ENCODE measurements at regions of chr10 and their contacts with region 1.

Region 1: GRCh38 chr10:21495752-21496342 is 29.6 kb downstream of the SKIDA1 start:
- DNase-seq: peak; percentile 56 to 94
- H3K4me3 ChIP-seq: peak overlapping the region; percentile 81
- H3K27ac ChIP-seq: peak overlapping the region; percentile 48
- H3K4me1 ChIP-seq: peaks cover 6% of the 10 kb centered on the region
- H3K27me3 ChIP-seq: no peaks in the 10 kb centered on the region
- CTCF ChIP-seq: peak; percentile 78

Region 2: DNA sequence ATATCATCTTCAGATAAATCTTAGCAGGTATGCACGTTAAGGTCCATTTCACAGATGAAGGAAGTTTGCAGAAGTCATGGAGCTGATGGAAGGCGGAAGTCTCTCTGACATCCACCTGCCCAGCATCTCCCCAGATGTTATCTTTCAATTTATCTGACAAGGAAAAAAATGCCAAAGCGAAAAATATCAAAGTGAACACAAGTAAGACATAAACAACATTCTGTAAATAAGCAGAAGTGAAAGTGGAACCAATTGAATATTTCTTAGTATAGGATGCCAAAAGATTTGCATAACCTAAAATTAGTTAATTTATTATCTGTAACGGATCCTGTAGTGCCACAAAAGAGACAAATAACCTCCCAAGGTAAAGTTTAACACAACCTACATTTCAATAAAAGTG is 525.1 kb before region 1 on chr10:
- CTCF ChIA-PET with region 1: no interaction called
- POLR2A ChIA-PET with region 1: no interaction called
- intact Hi-C with region 1: no loop called
- DNase-seq: no peak
- H3K4me3 ChIP-seq: no peak overlapping the region
- H3K27ac ChIP-seq: no peak overlapping the region
- H3K4me1 ChIP-seq: no peaks in the 10 kb centered on the region
- H3K27me3 ChIP-seq: no peaks in the 10 kb centered on the region
- CTCF ChIP-seq: no peak

Region 3: DNA sequence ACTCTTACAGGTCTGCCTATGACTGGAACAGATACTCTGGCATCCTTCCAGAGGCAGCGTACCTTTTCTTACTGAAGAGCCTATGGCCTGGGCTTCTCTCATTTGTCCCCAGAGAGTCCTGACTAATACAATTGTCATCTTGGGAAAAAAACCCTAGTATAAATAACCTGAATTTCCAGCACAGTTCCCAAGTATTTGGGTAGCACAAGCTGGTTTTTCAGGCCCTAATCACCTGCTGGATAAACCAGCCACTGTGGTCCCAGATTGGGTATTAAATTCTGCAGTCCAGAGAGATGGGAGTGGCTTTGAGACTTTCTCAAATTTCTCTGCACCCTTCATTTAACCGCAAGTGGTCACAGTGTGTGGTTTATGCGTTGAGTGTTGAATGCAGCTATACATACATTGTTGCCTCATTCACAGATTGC is 412.0 kb before region 1 on chr10:
- CTCF ChIA-PET with region 1: no interaction called
- POLR2A ChIA-PET with region 1: no interaction called
- intact Hi-C with region 1: loop called (anchors 10 kb)
- DNase-seq: peak; percentile 75 to 97
- H3K4me3 ChIP-seq: no peak overlapping the region
- H3K27ac ChIP-seq: peak overlapping the region; percentile 80
- H3K4me1 ChIP-seq: peaks cover 21% of the 10 kb centered on the region
- H3K27me3 ChIP-seq: no peaks in the 10 kb centered on the region
- CTCF ChIP-seq: no peak

Region 4: DNA sequence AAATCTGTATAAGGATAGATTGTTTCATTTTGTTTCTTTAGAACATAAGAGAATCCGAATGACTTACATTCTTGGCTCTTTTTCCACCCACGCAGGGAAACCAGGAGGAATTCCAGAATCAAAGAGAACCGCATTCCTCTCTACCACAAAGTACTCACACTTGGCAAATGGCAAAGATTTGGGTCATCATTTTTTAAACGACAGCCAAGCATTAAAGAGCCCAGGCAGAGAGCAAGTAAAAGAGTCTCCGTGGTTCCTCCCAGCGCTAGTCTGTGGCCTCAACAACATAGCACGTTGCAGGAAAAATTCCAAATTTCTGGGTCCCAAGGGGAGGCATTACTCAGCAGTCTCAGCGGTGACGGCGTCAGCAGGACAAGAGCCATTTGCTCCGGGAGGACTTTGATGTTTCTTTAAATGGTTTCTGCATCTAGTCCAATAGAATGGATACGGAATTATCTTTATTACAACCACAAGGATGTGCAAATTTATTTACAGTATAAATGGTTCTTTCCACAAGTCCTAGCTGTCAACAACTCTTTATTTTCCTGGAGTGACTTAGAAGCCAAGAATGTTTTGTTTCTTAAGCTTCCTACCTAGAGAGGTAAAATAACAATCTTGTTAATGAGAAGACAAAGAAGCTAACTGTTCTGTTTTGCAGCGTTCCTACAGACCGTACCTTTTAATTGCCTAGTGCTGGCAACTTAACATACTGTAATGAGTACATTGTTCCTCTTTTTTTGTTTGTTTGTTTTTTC is 202.9 kb before region 1 on chr10:
- CTCF ChIA-PET with region 1: no interaction called
- POLR2A ChIA-PET with region 1: no interaction called
- intact Hi-C with region 1: loop called (anchors 5 kb)
- DNase-seq: peak; percentile 77 to 87
- H3K4me3 ChIP-seq: peak overlapping the region; percentile 51; the same call in 1 of the 2 replicates
- H3K27ac ChIP-seq: peak overlapping the region; percentile 85
- H3K4me1 ChIP-seq: peaks cover 32% of the 10 kb centered on the region
- H3K27me3 ChIP-seq: no peaks in the 10 kb centered on the region
- CTCF ChIP-seq: no peak

Region 5: GRCh38 chr10:21516242-21517131 is 20.6 kb after region 1 on chr10:
- CTCF ChIA-PET with region 1: interaction called, 10 read pairs
- POLR2A ChIA-PET with region 1: no interaction called
- intact Hi-C with region 1: loop called (anchors 2 kb)
- DNase-seq: peak in 1 of 2 experiments; percentile 52
- H3K4me3 ChIP-seq: peak overlapping the region; percentile 66; the same call in 1 of the 2 replicates
- H3K27ac ChIP-seq: no peak overlapping the region
- H3K4me1 ChIP-seq: peaks cover 26% of the 10 kb centered on the region
- H3K27me3 ChIP-seq: no peaks in the 10 kb centered on the region
- CTCF ChIP-seq: no peak

Region 6: GRCh38 chr10:21533467-21534279 is 37.8 kb after region 1 on chr10 and contains the start of gene MLLT10:
- CTCF ChIA-PET with region 1: no interaction called
- POLR2A ChIA-PET with region 1: interaction called, 20 read pairs
- intact Hi-C with region 1: loop called (anchors 2 kb)
- DNase-seq: peak; percentile 67 to 95
- H3K4me3 ChIP-seq: peak within 1 kb of the TSS; percentile 71
- H3K27ac ChIP-seq: peak within 1 kb of the TSS; percentile 72
- H3K4me1 ChIP-seq: peaks cover 16% of the 10 kb centered on the region
- H3K27me3 ChIP-seq: no peaks in the 10 kb centered on the region
- CTCF ChIP-seq: no peak
- total RNA-seq, gene MLLT10: 39.6 and 48.4 TPM in 2 replicates

Region 7: DNA sequence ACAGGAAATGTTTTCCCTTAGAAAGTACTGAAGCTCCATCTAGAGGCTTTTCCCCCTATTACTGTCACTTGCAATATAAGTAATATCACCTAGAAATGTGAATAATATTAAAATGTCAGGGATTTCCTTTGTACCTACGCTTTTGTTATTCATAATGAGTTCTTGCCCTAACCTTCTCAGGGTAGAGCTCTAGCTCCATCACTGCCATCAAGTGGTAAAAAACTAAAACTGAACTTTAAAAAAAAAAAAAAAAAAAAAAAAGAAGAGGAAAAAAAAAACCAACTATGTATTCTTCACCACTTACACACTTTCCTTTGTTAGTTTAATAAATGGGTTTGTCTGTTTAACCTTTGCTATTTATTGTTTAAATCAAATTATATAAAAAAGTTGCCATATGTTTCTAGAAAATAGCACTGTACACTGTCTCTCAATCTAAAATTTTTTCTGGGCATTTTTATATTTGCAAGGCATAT is 457.8 kb after region 1 on chr10:
- CTCF ChIA-PET with region 1: interaction called, 9 read pairs
- POLR2A ChIA-PET with region 1: no interaction called
- intact Hi-C with region 1: loop called (anchors 1 kb)
- DNase-seq: peak in 1 of 2 experiments; percentile 79
- H3K4me3 ChIP-seq: no peak overlapping the region
- H3K27ac ChIP-seq: no peak overlapping the region
- H3K4me1 ChIP-seq: no peaks in the 10 kb centered on the region
- H3K27me3 ChIP-seq: no peaks in the 10 kb centered on the region
- CTCF ChIP-seq: peak; percentile 62

Measured in PC-9 (cell line).